ENCODE measurements at regions of chr1 and their contacts with region 1.

Region 1: GRCh38 chr1:192808518-192809306 is at the start of gene RGS2:
- DNase-seq: peak; percentile 92 to 96 (median 95)
- ATAC-seq: peak; percentile 95 to 98 (median 98)
- H3K4me3 ChIP-seq: peak within 1 kb of the TSS; percentile 12 to 89 (median 75)
- H3K27ac ChIP-seq: peak within 1 kb of the TSS; percentile 24 to 93 (median 88)
- H3K4me1 ChIP-seq: peaks cover 0 to 49% (median 21%) of the 10 kb centered on the region in 12 donors
- H3K27me3 ChIP-seq: no peaks in the 10 kb centered on the region
- CTCF ChIP-seq: peak in 6 of 12 donors; percentile 7 to 58 (median 36)
- POLR2A ChIP-seq: peak; percentile 94 to 100
- total RNA-seq, gene RGS2: 7.6 to 32.6 (median 9.8) TPM

Region 2: GRCh38 chr1:192477630-192478029 is 331.1 kb before region 1 on chr1:
- intact Hi-C with region 1: loop called in 9 of 10 experiments (anchors 5 to 10 kb)
- DNase-seq: no peak
- ATAC-seq: peak in 3 of 4 donors; percentile 23 to 76 (median 70)
- H3K4me3 ChIP-seq: no peak overlapping the region
- H3K27ac ChIP-seq: peak overlapping the region in 2 of 12 donors; percentile 51 to 66
- H3K4me1 ChIP-seq: peaks cover 0 to 17% (median 3%) of the 10 kb centered on the region in 12 donors
- H3K27me3 ChIP-seq: peaks cover 0 to 1% (median 0%) of the 10 kb centered on the region in 9 donors
- CTCF ChIP-seq: peak; percentile 2 to 69 (median 58)
- POLR2A ChIP-seq: no peak

Region 3: DNA sequence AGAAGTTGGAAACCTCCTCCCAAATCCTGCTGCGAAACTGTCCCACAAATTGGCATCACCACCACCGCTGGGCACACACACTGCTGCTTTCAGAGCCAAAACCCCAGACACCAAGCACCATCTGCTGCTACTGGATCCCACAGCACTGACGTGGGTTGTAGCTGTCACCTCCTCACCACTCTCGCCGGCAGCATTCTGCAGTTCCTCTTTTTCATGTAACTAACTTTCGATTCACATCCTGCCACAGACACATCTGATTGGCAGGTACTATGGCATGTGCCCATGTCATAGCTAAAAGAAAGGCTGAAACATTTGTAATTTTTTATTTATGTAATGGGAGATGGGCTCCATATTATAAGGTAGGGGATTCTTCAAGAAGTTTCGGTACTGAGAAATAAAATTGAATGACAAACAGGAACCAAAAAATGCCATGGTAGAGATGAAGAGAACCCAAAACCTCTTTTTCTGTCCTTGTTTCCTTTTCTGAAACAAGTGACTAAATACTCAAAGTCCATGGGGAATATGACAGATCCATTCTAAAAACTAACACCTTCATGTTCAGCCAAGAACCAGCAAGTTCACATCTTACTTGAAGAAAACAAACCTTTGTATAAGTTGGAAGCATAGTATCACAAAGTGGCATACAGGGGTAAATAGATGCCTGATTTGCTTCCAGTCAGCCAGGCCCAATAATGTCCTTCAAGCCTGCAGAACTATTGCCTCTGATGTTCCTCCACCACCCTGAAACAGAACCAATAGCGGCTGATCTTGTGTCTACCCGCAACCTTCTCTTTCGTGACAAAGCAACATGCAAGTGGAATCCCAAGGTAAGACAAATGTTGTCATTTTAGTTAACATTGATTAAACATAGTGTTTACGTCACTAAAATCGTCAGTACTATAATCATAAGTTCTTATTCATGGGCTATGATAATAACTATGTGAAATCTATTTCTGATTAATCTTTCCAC is 199.3 kb before region 1 on chr1:
- intact Hi-C with region 1: loop called in 4 of 10 experiments (anchors 10 kb)
- DNase-seq: peak; percentile 26 to 60 (median 32)
- ATAC-seq: peak; percentile 39 to 79 (median 61)
- H3K4me3 ChIP-seq: no peak overlapping the region
- H3K27ac ChIP-seq: peak overlapping the region in 1 of 12 donors; percentile 41
- H3K4me1 ChIP-seq: peaks cover 0 to 16% (median 0%) of the 10 kb centered on the region in 12 donors
- H3K27me3 ChIP-seq: no peaks in the 10 kb centered on the region
- CTCF ChIP-seq: no peak
- POLR2A ChIP-seq: no peak

Region 4: DNA sequence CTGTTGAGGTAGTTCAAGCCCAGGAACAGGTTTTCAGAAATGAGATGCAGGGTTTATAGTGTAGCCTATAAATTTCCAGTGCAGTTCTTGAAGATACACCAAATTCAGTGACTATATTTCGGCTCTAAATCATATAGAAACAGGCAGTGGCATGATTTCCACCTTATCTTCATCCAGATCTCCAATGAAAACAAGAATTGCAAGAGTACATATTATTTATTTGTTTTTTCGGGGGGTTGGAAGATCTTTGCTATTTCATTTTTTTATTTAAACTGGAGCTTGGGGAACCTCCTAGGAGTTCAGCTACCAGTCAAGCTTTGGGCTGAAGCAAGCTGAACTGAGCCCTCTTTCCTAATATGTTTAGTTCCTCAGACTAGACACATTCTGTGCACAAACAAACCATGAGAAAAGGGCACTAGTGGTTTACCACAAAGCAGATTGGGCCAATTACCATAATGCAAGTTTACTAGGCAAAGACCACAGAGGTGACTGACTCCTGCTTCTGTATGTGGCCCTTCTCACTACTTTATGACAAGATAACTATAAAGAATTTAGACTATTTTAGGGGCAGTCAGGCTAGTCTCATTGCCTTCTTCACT is 68.7 kb after region 1 on chr1:
- intact Hi-C with region 1: loop called in 3 of 10 experiments (anchors 2 to 5 kb)
- DNase-seq: no peak
- ATAC-seq: peak in 2 of 4 donors; percentile 16 to 41
- H3K4me3 ChIP-seq: no peak overlapping the region
- H3K27ac ChIP-seq: peak overlapping the region in 4 of 12 donors; percentile 25 to 65 (median 52)
- H3K4me1 ChIP-seq: peaks cover 0 to 49% (median 20%) of the 10 kb centered on the region in 12 donors
- H3K27me3 ChIP-seq: no peaks in the 10 kb centered on the region
- CTCF ChIP-seq: no peak
- POLR2A ChIP-seq: no peak

Region 5: DNA sequence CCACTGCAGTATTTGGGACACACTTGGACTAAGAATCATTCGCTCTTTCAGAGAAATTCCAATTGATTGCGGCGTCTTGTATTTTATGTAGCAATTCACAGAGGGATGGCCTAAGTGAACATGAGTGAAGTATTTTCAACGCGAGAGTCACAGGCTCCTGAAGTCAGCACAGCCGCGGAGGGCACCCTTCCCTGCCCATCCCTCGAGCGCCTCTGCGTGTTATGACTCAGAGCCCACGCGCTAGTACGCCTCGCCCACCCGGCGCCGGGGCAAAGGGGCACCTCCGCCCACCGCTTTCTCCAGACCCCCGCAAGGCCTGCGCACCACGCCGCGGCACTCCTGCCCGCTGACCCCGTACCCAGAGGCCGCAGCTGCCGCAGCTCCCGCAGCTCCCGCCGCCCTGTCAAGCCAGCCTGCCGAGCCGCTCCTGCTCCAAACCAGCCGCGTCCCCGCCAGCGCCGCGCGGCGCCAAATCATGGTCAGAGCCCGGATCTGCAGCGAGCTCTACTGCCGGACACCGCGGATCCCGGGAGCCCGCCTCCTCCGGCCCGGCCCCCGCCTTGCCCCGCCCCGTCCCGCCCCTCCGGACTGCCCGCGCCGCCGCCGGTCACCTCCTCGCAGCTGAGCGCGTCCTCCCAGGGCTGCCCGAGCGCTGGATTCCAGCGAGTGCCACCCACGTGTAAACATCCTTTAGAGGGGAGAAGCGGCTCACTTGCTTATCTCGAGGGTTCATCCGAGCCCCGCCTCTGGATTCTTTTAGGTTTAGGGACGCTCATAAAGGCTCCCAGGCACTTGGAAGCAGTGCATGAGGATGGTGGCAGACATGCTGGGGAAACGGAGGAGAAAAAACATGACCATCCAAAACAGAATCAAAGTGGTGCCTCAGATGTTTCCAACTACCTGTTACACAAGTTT is 296.5 kb after region 1 on chr1 and contains the start of gene GLRX2:
- intact Hi-C with region 1: loop called in 2 of 10 experiments (anchors 5 to 10 kb)
- DNase-seq: peak; percentile 87 to 94 (median 90)
- ATAC-seq: peak; percentile 93 to 99 (median 98)
- H3K4me3 ChIP-seq: peak within 1 kb of the TSS; percentile 78 to 96 (median 88)
- H3K27ac ChIP-seq: peak within 1 kb of the TSS; percentile 70 to 99 (median 92)
- H3K4me1 ChIP-seq: peaks cover 3 to 25% (median 13%) of the 10 kb centered on the region in 12 donors
- H3K27me3 ChIP-seq: no peaks in the 10 kb centered on the region
- CTCF ChIP-seq: peak in 5 of 12 donors; percentile 5 to 28 (median 18)
- POLR2A ChIP-seq: peak in 1 of 2 donors; percentile 86
- total RNA-seq, gene GLRX2: 11.0 to 102 (median 28.5) TPM

Measured in heart left ventricle (tissue), 16 donors.